ENCODE measurements at regions of chr9 and their contacts with region 1.

Region 1: GRCh38 chr9:68793605-68794343 is 88.7 kb downstream of the PIP5K1B start:
- DNase-seq: no peak
- ATAC-seq: no peak

Region 2: GRCh38 chr9:68727636-68728035 is 66.1 kb before region 1 on chr9:
- intact Hi-C with region 1: no loop called
- DNase-seq: no peak
- ATAC-seq: no peak

Region 3: GRCh38 chr9:68769852-68770251 is 23.9 kb before region 1 on chr9:
- intact Hi-C with region 1: no loop called
- DNase-seq: no peak
- ATAC-seq: no peak

Region 4: GRCh38 chr9:68996462-68996861 is 202.7 kb after region 1 on chr9:
- intact Hi-C with region 1: no loop called
- DNase-seq: no peak
- ATAC-seq: no peak

Region 5: GRCh38 chr9:69019808-69020207 is 226.0 kb after region 1 on chr9:
- intact Hi-C with region 1: loop called (anchors 10 kb)
- DNase-seq: no peak
- ATAC-seq: no peak